Ascending aorta (tissue), 2 donors: ENCODE measurements at regions of chr4 and their contacts with region 1.

Region 1: DNA sequence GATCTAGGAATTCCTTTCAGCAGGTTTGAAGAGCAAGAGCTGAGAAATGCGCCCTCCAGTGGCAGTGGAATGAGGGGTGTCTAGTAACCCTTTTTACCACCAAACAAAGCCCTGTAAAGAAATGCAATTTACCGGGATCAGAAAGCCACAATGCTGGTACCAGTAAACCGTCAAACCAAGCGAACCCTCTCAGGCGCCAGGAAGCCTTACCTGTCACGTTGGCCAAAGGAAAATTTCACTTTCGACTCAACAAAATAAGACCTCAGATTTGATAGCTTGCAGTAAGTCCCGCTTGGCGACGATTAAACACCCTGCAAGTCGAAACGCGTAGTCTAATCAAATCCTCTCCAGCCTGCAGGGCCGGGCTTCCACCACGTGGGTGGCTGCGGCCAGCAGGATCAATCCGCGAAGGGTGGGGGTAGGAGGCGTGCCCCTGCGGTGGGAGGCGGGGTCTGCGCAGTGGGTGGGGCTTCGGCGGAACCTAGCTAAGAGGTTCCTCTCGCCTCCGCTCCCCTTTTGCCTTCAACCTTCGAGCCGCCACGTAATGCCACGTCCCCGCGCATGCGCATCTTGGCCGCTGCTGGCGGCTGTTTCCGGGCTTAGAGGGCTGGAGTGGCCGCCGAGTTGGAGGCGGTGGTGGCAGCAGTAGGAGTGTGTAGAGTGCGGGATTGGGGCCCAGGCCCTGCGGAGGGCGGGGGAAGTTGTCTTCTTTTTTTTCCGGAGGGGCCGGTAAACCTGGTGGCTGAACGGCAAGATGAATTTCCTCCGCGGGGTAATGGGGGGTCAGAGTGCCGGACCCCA is at the start of gene USO1:
- DNase-seq: peak; percentile 93 to 99
- H3K4me3 ChIP-seq: peak within 1 kb of the TSS; percentile 78 to 84
- H3K27ac ChIP-seq: peak within 1 kb of the TSS; percentile 97
- H3K4me1 ChIP-seq: peaks cover 3 to 28% of the 10 kb centered on the region in 2 donors
- H3K27me3 ChIP-seq: no peaks in the 10 kb centered on the region
- CTCF ChIP-seq: peak; percentile 55 to 74 (median 67)
- total RNA-seq, gene USO1: 25.5 TPM

Region 2: GRCh38 chr4:75457365-75457764 is 266.9 kb before region 1 on chr4:
- intact Hi-C with region 1: no loop called
- DNase-seq: no peak
- H3K4me3 ChIP-seq: no peak overlapping the region
- H3K27ac ChIP-seq: no peak overlapping the region
- H3K4me1 ChIP-seq: no peaks in the 10 kb centered on the region
- H3K27me3 ChIP-seq: no peaks in the 10 kb centered on the region
- CTCF ChIP-seq: no peak

Region 3: GRCh38 chr4:75477201-75477600 is 247.1 kb before region 1 on chr4:
- intact Hi-C with region 1: no loop called
- DNase-seq: no peak
- H3K4me3 ChIP-seq: no peak overlapping the region
- H3K27ac ChIP-seq: no peak overlapping the region
- H3K4me1 ChIP-seq: no peaks in the 10 kb centered on the region
- H3K27me3 ChIP-seq: no peaks in the 10 kb centered on the region
- CTCF ChIP-seq: no peak

Region 4: GRCh38 chr4:75514131-75514948 is 209.9 kb before region 1 on chr4 and contains the starts of genes RCHY1 and THAP6:
- intact Hi-C with region 1: loop called (anchors 5 kb)
- DNase-seq: peak; percentile 79 to 98
- H3K4me3 ChIP-seq: peak within 1 kb of the TSS; percentile 85 to 90
- H3K27ac ChIP-seq: peak within 1 kb of the TSS; percentile 92 to 95
- H3K4me1 ChIP-seq: peaks cover 8 to 32% of the 10 kb centered on the region in 2 donors
- H3K27me3 ChIP-seq: no peaks in the 10 kb centered on the region
- CTCF ChIP-seq: no peak
- total RNA-seq, gene RCHY1: 16.2 TPM
- total RNA-seq, gene THAP6: 2.4 TPM

Region 5: GRCh38 chr4:75630174-75630936 is 93.9 kb before region 1 on chr4 and contains the start of gene CDKL2:
- intact Hi-C with region 1: loop called (anchors 1 kb)
- DNase-seq: peak; percentile 53 to 94
- H3K4me3 ChIP-seq: peak within 1 kb of the TSS; percentile 74 to 77
- H3K27ac ChIP-seq: peak within 1 kb of the TSS; percentile 36 to 57
- H3K4me1 ChIP-seq: no peaks in the 10 kb centered on the region
- H3K27me3 ChIP-seq: no peaks in the 10 kb centered on the region
- CTCF ChIP-seq: no peak
- total RNA-seq, gene CDKL2: not detected

Region 6: DNA sequence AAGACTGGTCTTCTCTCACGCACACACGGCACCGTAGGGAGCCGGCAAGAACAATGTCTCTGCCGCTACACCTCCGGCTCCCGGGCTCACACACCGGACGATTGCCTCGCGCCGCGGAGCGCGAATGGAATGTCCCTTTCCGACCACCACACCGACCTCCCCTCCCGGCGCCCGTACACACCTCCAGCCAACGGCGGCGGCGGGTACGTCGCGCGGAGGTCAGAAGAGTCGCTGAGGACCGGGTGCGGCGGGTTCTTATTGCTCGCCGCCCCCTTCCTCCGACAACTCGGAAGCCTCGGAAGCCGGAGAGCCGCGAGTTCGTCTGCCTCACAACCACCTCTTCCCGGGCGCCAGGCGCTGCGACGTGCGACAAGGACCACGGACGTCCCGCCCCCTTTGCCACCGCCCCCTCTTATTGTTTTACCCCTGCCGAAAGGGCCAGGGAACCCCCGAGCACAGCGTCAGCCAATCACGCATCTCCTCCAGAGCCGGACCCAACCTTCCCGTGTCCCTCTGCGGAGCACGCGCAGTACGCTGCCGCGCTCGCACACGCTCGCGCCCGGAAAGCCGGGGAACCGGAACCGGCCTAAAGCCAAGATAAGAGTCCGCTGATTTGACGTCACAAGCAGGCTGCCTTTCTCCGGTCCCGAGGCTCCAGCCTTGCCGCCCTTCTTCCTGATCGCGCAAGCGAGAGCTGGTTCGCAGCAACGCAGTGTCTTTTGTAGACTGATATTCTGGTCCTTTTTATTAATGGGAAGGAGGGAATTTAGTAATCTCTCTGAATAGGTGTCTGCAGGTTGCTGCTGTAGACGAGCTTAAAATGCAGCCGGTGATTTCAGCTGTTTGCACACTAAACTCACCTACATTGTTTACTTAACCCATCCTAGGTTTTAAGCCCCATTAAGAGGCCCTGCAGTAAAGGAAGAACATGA is 51.0 kb before region 1 on chr4 and contains the start of gene G3BP2:
- intact Hi-C with region 1: loop called (anchors 1 kb)
- DNase-seq: peak; percentile 94 to 99
- H3K4me3 ChIP-seq: peak within 1 kb of the TSS; percentile 92 to 99
- H3K27ac ChIP-seq: peak within 1 kb of the TSS; percentile 99 to 100
- H3K4me1 ChIP-seq: peaks cover 3 to 24% of the 10 kb centered on the region in 2 donors
- H3K27me3 ChIP-seq: no peaks in the 10 kb centered on the region
- CTCF ChIP-seq: no peak
- total RNA-seq, gene G3BP2: 88.9 TPM

Region 7: GRCh38 chr4:75849461-75849860 is 125.2 kb after region 1 on chr4:
- intact Hi-C with region 1: loop called (anchors 5 kb)
- DNase-seq: no peak
- H3K4me3 ChIP-seq: no peak overlapping the region
- H3K27ac ChIP-seq: no peak overlapping the region
- H3K4me1 ChIP-seq: peaks cover 0 to 2% of the 10 kb centered on the region in 2 donors
- H3K27me3 ChIP-seq: no peaks in the 10 kb centered on the region
- CTCF ChIP-seq: no peak

Region 8: GRCh38 chr4:76160355-76160754 is 436.1 kb after region 1 on chr4:
- intact Hi-C with region 1: no loop called
- DNase-seq: no peak
- H3K4me3 ChIP-seq: no peak overlapping the region
- H3K27ac ChIP-seq: no peak overlapping the region
- H3K4me1 ChIP-seq: no peaks in the 10 kb centered on the region
- H3K27me3 ChIP-seq: no peaks in the 10 kb centered on the region
- CTCF ChIP-seq: no peak

Region 9: DNA sequence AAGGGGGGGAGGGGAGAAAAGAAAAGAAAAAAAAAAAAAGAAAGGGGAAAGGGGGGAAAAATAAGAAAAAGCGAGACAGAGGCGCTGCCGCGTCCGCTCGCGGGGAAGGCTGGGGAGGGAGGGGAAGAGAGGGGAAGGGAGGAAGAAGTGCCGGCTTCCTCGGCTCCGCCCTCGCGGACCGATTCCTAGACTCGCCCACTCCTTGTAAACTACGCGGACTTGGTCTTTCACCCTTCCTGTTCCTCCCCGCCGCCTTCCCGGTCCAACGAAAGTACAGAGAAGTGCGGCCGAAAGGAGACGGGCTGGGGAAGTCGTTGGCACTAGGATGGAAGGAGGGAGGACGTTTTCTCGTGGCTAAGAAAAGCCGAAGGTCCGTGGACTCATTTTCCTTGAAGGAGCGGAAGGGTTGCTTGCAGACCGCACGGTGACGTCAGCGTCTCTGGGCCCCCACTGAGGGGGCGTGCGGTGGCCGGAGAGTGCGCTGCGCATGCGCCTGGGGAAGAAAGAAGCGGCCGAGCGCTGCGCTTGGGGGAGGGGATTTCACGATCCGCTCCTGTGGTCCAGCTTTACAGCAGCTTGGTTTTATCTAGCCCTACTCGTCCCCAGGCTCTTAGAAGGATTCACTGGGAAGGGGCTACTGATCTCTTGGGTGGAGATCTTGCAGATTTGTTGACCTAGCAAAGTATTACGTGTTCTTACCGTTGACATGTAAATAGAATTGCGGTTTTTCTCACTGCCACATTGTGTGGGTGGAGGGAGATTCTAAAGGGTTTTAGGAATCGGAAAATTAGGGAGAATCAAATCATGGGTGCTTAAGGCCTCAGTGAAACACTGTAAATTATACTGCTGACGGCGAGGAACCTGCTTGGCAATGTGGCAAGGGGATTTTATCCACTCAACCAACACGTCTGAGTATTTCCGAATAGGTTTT is 1351.9 kb after region 1 on chr4 and contains the start of gene CCNI:
- intact Hi-C with region 1: loop called (anchors 5 kb)
- DNase-seq: peak; percentile 77 to 97
- H3K4me3 ChIP-seq: peak within 1 kb of the TSS; percentile 88 to 97
- H3K27ac ChIP-seq: peak within 1 kb of the TSS; percentile 99 to 100
- H3K4me1 ChIP-seq: peaks cover 4 to 5% of the 10 kb centered on the region in 2 donors
- H3K27me3 ChIP-seq: no peaks in the 10 kb centered on the region
- CTCF ChIP-seq: no peak
- total RNA-seq, gene CCNI: 140 TPM